Esophagus muscularis mucosa (tissue), 4 donors: ENCODE measurements at regions of chr4 and their contacts with region 1.

Region 1: GRCh38 chr4:121252224-121252806 is 88.2 kb upstream of the TNIP3 start:
- DNase-seq: peak; percentile 88
- H3K4me3 ChIP-seq: no peak overlapping the region
- H3K27ac ChIP-seq: no peak overlapping the region
- H3K4me1 ChIP-seq: no peaks in the 10 kb centered on the region
- H3K27me3 ChIP-seq: no peaks in the 10 kb centered on the region
- CTCF ChIP-seq: peak; percentile 58 to 81 (median 73)
- EP300 ChIP-seq: no peak
- POLR2A ChIP-seq: no peak

Region 2: GRCh38 chr4:120156120-120156718 is 1096.1 kb before region 1 on chr4:
- intact Hi-C with region 1: loop called (anchors 5 kb)
- DNase-seq: no peak
- H3K4me3 ChIP-seq: no peak overlapping the region
- H3K27ac ChIP-seq: no peak overlapping the region
- H3K4me1 ChIP-seq: no peaks in the 10 kb centered on the region
- H3K27me3 ChIP-seq: no peaks in the 10 kb centered on the region
- CTCF ChIP-seq: peak; percentile 55 to 71 (median 63)
- EP300 ChIP-seq: no peak
- POLR2A ChIP-seq: no peak

Region 3: GRCh38 chr4:121096629-121097028 is 155.7 kb before region 1 on chr4:
- intact Hi-C with region 1: no loop called
- DNase-seq: no peak
- H3K4me3 ChIP-seq: no peak overlapping the region
- H3K27ac ChIP-seq: no peak overlapping the region
- H3K4me1 ChIP-seq: no peaks in the 10 kb centered on the region
- H3K27me3 ChIP-seq: no peaks in the 10 kb centered on the region
- CTCF ChIP-seq: peak; percentile 40 to 61 (median 60)
- EP300 ChIP-seq: no peak
- POLR2A ChIP-seq: no peak

Region 4: GRCh38 chr4:121199742-121200561 is 52.4 kb before region 1 on chr4:
- intact Hi-C with region 1: loop called (anchors 5 kb)
- DNase-seq: no peak
- H3K4me3 ChIP-seq: no peak overlapping the region
- H3K27ac ChIP-seq: no peak overlapping the region
- H3K4me1 ChIP-seq: no peaks in the 10 kb centered on the region
- H3K27me3 ChIP-seq: no peaks in the 10 kb centered on the region
- CTCF ChIP-seq: no peak
- EP300 ChIP-seq: no peak
- POLR2A ChIP-seq: no peak